Activated naive CD4-positive, alpha-beta T cell treated with anti-CD3 and anti-CD28 coated beads for 36 hours (primary cell): ENCODE measurements at regions of chr12 and their contacts with region 1.

Region 1: DNA sequence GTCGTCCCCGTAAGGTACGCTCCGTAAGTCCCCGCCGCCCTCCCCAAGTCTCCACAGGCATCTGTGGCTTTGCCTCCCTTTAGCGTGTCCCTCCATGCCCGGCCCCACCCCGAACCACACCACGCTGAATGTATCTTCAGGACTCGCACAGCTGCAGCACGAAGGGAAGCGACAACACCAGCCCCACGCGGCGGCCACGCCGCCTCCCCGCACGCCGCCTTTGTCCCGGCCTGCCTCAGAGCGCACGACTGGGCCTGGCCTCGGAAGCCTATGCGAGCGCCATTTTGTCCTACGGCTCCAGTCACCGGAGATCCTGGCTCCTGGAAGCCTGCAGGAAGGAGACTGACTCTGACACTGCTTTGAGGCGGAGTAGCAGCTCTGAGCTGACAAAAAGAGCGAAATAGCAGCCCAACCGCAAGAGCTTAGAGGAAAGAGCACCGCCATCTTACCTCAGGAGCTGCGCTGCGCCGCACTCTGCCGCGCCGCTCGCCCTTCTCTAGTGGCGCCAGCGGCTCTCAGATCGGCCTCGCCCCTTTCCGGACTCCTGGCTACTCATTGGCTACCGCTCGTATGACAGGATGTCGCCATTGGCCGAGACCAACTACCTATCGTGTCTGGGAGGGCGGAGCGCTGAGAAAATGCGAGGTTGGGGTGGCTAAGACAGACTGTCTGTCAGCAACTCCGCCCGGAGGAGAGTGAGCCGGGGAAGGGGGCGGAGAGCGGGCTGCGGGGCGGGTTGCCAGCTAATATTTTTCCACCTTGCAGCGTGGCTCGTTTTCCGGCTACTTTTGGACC is at the start of gene KANSL2:
- DNase-seq: peak; percentile 99
- H3K4me3 Mint-ChIP-seq: peak within 1 kb of the TSS; percentile 98
- H3K27ac Mint-ChIP-seq: peak within 1 kb of the TSS; percentile 93
- H3K4me1 Mint-ChIP-seq: peaks cover 49% of the 10 kb centered on the region
- H3K27me3 Mint-ChIP-seq: no peaks in the 10 kb centered on the region
- total RNA-seq, gene KANSL2: 37.9 to 39.1 TPM

Region 2: DNA sequence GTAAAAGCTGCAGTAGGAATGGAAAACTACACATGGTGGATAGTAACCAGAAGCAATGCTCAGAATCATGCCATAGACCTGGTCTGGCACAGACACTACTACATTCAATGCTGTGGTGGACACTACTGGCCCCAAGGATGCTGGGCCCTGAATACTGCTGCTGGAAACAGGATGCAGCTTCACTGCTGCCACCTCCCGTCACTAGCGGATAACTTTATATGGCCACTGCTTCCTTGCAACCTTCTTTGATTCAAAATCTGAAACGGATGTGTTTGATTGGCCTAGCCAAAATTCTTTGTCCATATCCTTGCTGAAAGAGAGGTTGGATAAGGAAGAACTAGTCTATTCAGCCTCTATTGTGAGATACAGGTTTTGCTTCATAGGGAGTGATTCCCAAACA is 76.3 kb after region 1 on chr12:
- CTCF ChIA-PET with region 1: interaction called, 3 read pairs
- intact Hi-C with region 1: loop called (anchors 1 kb)
- DNase-seq: no peak
- H3K4me3 Mint-ChIP-seq: no peak overlapping the region
- H3K27ac Mint-ChIP-seq: no peak overlapping the region
- H3K4me1 Mint-ChIP-seq: peaks cover 2% of the 10 kb centered on the region
- H3K27me3 Mint-ChIP-seq: no peaks in the 10 kb centered on the region